Activated B cell treated with CpG ODN at 0.5 μM for 24 hours (primary cell): ENCODE measurements at regions of chr19 and their contacts with region 1.

Region 1: GRCh38 chr19:50804420-50805272 is 14.4 kb downstream of the ACP4 start:
- DNase-seq: peak; percentile 94
- ATAC-seq: peak; percentile 98
- H3K4me3 Mint-ChIP-seq: peak overlapping the region; percentile 100
- H3K27ac Mint-ChIP-seq: peak overlapping the region; percentile 100
- H3K4me1 Mint-ChIP-seq: peaks cover 37% of the 10 kb centered on the region
- H3K27me3 Mint-ChIP-seq: no peaks in the 10 kb centered on the region
- CTCF ChIP-seq: no peak

Region 2: DNA sequence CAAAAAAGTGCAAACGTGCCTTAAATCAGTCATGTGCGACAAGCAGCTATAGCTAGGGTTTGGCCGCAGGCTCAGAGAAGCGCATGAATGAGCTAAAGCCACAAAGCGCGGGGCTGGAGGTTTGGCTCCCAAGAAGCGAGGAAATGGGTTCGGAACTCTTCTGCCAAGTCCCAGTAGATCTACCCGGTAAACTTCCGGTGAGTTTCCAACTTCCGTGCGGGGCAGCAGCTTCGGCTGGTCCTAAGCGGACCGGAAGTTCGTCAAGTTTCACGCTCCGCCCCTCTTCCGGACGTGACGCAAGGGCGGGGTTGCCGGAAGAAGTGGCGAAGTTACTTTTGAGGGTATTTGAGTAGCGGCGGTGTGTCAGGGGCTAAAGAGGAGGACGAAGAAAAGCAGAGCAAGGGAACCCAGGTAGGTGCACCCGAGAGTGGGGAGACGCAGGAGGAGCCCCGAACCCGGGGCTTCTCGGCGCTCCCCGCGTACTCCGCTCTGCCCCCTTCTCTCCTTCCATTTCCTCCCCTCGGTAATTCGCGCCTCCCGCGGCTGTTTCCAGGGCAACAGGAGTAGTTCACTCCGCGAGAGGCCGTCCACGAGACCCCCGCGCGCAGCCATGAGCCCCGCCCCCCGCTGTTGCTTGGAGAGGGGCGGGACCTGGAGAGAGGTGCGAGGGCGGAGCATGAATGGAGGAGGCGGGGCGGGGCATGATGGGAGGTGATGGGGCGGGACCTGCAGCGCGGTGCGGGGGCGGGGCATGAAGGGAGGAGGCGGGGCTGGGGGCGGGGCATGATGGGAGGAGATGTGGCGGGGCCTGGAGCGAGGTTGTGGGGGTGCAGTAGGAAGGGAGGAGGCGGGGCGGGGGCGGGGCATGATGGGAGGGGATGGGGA is 428.2 kb before region 1 on chr19 and contains the start of gene NR1H2:
- CTCF ChIA-PET with region 1: no interaction called
- POLR2A ChIA-PET with region 1: no interaction called
- intact Hi-C with region 1: loop called (anchors 2 kb)
- DNase-seq: peak; percentile 90
- ATAC-seq: peak; percentile 88
- H3K4me3 Mint-ChIP-seq: peak within 1 kb of the TSS; percentile 99
- H3K27ac Mint-ChIP-seq: peak within 1 kb of the TSS; percentile 99
- H3K4me1 Mint-ChIP-seq: peaks cover 14% of the 10 kb centered on the region
- H3K27me3 Mint-ChIP-seq: no peaks in the 10 kb centered on the region
- CTCF ChIP-seq: no peak
- total RNA-seq, gene NR1H2: 66.9 and 79.5 TPM in 2 replicates

Region 3: GRCh38 chr19:50511068-50511822 is 293.4 kb before region 1 on chr19 and contains the start of gene JOSD2:
- CTCF ChIA-PET with region 1: no interaction called
- POLR2A ChIA-PET with region 1: interaction called, 9 read pairs
- intact Hi-C with region 1: loop called (anchors 1 kb)
- DNase-seq: peak; percentile 96
- ATAC-seq: peak; percentile 94
- H3K4me3 Mint-ChIP-seq: peak within 1 kb of the TSS; percentile 89
- H3K27ac Mint-ChIP-seq: peak within 1 kb of the TSS; percentile 93
- H3K4me1 Mint-ChIP-seq: peaks cover 13% of the 10 kb centered on the region
- H3K27me3 Mint-ChIP-seq: peaks cover 5% of the 10 kb centered on the region
- CTCF ChIP-seq: no peak
- total RNA-seq, gene JOSD2: 21.0 and 23.7 TPM in 2 replicates

Region 4: GRCh38 chr19:50776106-50776505 is 28.5 kb before region 1 on chr19:
- CTCF ChIA-PET with region 1: no interaction called
- POLR2A ChIA-PET with region 1: no interaction called
- intact Hi-C with region 1: no loop called
- DNase-seq: no peak
- ATAC-seq: no peak
- H3K4me3 Mint-ChIP-seq: no peak overlapping the region
- H3K27ac Mint-ChIP-seq: no peak overlapping the region
- H3K4me1 Mint-ChIP-seq: peaks cover 3% of the 10 kb centered on the region
- H3K27me3 Mint-ChIP-seq: peaks cover 46% of the 10 kb centered on the region
- CTCF ChIP-seq: no peak

Region 5: DNA sequence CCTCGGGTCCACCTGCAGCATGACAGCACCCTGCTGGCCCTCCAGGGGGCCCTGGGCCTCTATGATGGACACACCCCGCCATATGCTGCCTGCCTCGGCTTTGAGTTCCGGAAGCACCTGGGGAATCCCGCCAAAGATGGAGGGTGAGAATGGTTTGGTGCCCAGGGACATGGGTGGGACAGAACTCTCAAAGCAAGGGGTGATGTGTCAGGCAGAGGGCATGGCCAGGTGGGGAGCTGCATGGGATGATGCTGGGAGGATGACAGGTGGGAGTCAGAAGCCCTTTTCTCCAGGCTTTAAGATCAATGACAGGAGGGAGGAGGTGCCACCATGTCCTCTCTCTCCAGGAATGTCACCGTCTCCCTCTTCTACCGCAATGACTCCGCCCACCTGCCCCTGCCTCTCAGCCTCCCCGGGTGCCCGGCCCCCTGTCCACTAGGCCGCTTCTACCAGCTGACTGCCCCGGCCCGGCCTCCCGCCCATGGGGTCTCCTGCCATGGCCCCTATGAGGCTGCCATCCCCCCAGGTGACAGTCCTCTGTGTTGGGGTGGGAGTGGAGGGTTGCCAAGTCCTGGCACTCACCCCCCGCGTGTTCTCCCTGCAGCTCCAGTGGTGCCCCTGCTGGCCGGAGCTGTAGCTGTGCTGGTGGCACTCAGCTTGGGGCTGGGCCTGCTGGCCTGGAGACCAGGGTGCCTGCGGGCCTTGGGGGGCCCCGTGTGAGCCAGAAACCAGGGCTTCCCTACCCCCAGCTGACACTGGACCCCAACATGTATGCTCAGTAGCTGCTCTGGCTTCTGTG is 10.0 kb before region 1 on chr19:
- CTCF ChIA-PET with region 1: no interaction called
- POLR2A ChIA-PET with region 1: interaction called, 14 read pairs
- intact Hi-C with region 1: no loop called
- DNase-seq: no peak
- ATAC-seq: peak; percentile 64
- H3K4me3 Mint-ChIP-seq: no peak overlapping the region
- H3K27ac Mint-ChIP-seq: peak overlapping the region; percentile 24
- H3K4me1 Mint-ChIP-seq: peaks cover 9% of the 10 kb centered on the region
- H3K27me3 Mint-ChIP-seq: no peaks in the 10 kb centered on the region
- CTCF ChIP-seq: no peak

Region 6: DNA sequence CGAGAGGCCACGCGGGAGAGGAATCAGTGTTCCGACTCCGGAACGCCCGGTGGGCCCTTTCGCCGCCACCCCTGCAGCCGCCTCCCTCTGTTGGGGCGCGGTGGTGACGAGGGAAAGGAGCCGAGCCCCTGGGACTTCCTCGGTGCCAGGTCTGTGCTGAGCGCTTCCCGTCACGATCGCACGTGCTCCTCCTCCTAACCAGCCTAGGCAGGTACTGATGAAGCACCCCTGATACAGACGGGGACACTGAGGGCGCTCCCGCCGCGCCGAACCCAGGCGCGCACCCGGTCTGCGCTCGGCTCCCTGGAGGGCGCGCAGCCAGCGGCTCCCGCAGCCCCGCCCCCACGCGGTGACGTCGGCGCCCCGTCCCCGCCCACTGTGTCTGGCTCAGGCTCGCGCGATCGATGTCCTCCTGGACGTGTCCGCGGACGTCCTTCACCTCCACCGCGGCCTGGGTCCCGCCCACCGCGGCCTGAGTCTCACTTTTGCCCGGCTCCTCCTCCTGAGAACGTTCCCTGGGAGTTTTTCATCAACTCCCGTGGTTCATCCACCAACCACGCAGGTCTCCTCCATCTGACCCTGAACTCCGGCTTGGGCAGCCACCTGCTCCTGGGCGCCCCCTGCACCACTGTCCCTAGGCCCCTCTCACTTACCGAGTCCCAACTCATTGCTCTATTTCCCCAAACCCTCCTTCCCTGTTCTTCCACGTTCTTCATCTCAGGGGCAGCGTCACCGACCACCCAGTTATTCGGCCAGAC is 31.3 kb after region 1 on chr19:
- CTCF ChIA-PET with region 1: no interaction called
- POLR2A ChIA-PET with region 1: no interaction called
- intact Hi-C with region 1: loop called (anchors 2 kb)
- DNase-seq: peak; percentile 80
- ATAC-seq: peak; percentile 94
- H3K4me3 Mint-ChIP-seq: peak overlapping the region; percentile 83
- H3K27ac Mint-ChIP-seq: peak overlapping the region; percentile 20
- H3K4me1 Mint-ChIP-seq: peaks cover 27% of the 10 kb centered on the region
- H3K27me3 Mint-ChIP-seq: peaks cover 36% of the 10 kb centered on the region
- CTCF ChIP-seq: no peak

Region 7: DNA sequence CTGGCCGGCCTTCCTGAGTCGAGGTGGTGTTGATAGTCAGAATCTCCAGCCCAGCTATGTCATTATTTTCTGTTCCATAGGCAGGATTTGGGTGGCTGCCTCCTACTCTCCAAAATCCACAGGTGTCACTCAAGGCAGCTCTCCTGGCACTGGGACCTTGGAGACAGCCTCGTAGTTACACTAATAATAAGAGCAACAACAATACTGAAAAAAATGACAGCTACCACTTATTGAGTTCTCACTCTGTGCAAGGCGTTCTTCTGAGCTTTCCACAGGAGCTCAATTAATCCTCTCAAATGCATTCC is 242.3 kb after region 1 on chr19:
- CTCF ChIA-PET with region 1: no interaction called
- POLR2A ChIA-PET with region 1: no interaction called
- intact Hi-C with region 1: no loop called
- DNase-seq: no peak
- ATAC-seq: no peak
- H3K4me3 Mint-ChIP-seq: no peak overlapping the region
- H3K27ac Mint-ChIP-seq: no peak overlapping the region
- H3K4me1 Mint-ChIP-seq: no peaks in the 10 kb centered on the region
- H3K27me3 Mint-ChIP-seq: peaks cover 9% of the 10 kb centered on the region
- CTCF ChIP-seq: no peak

Region 8: GRCh38 chr19:51367565-51368365 is 563.1 kb after region 1 on chr19:
- CTCF ChIA-PET with region 1: no interaction called
- POLR2A ChIA-PET with region 1: no interaction called
- intact Hi-C with region 1: loop called (anchors 10 kb)
- DNase-seq: peak; percentile 99
- ATAC-seq: peak; percentile 84
- H3K4me3 Mint-ChIP-seq: peak overlapping the region; percentile 98
- H3K27ac Mint-ChIP-seq: peak overlapping the region; percentile 96
- H3K4me1 Mint-ChIP-seq: peaks cover 36% of the 10 kb centered on the region
- H3K27me3 Mint-ChIP-seq: no peaks in the 10 kb centered on the region
- CTCF ChIP-seq: no peak